ENCODE measurements at regions of chr6 and their contacts with region 1.

Region 1: GRCh38 chr6:72411872-72412708 is 209.8 kb upstream of the KCNQ5 start:
- DNase-seq: peak; percentile 81

Region 2: GRCh38 chr6:72461144-72461543 is 49.1 kb after region 1 on chr6:
- intact Hi-C with region 1: no loop called
- DNase-seq: no peak

Region 3: GRCh38 chr6:73129653-73130443 is 717.8 kb after region 1 on chr6:
- intact Hi-C with region 1: loop called (anchors 10 kb)
- DNase-seq: peak; percentile 81

Region 4: DNA sequence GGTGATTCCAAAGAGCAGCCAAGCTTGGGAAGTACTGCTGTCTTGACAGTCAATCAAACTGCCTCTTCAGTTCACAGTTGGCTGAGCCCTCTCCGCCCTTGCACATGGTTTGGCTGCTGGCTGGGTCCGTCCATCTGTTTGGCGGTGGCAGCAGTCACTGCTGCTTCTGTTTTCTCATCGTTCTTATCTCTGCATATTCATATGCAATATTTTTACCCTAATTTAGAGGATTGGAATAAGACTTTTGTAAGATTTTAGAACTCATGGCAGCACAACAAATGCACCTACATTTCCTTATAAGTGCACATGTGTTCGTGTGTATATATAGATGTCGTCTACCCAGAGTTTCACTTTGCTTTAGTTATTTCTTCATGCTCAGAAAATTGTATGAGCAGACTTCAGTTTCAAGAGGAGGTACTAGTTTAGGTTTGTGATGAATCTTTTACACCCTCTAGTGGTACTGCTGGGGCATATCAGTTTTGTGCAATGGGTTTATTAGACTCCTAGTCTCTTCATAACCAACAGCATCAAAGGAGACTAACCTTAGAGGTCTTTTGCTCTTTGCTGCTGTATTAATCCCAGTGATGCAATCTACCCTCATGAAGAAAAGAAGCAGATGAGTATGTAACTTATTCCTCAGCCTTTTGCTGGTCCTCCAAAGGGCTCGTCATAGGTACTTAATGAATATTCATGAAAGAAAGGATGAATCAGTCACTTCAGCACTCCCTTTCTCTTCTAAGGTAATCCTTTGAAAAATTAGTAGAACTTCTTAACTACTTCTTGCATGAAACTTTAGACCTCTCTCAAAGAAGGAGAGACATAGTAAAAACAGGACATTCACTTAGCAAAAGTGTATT is 768.9 kb after region 1 on chr6:
- intact Hi-C with region 1: loop called (anchors 5 kb)
- DNase-seq: no peak

Region 5: GRCh38 chr6:73329201-73329600 is 917.1 kb after region 1 on chr6:
- intact Hi-C with region 1: loop called (anchors 10 kb)
- DNase-seq: no peak

Measured in cardiac septum (tissue), 1 donor.